ENCODE measurements at regions of chr21 and their contacts with region 1.

Region 1: GRCh38 chr21:14864211-14865021 is 200.4 kb downstream of the NRIP1 start:
- DNase-seq: peak; percentile 63
- H3K4me3 ChIP-seq: no peak overlapping the region
- H3K27ac ChIP-seq: no peak overlapping the region
- H3K4me1 ChIP-seq: no peaks in the 10 kb centered on the region
- H3K27me3 ChIP-seq: no peaks in the 10 kb centered on the region
- CTCF ChIP-seq: peak; percentile 76

Region 2: GRCh38 chr21:14259747-14260146 is 604.7 kb before region 1 on chr21:
- CTCF ChIA-PET with region 1: no interaction called
- POLR2A ChIA-PET with region 1: no interaction called
- intact Hi-C with region 1: loop called (anchors 10 kb)
- DNase-seq: peak; percentile 78
- H3K4me3 ChIP-seq: no peak overlapping the region
- H3K27ac ChIP-seq: no peak overlapping the region
- H3K4me1 ChIP-seq: no peaks in the 10 kb centered on the region
- H3K27me3 ChIP-seq: peaks cover 6% of the 10 kb centered on the region
- CTCF ChIP-seq: peak; percentile 72

Region 3: DNA sequence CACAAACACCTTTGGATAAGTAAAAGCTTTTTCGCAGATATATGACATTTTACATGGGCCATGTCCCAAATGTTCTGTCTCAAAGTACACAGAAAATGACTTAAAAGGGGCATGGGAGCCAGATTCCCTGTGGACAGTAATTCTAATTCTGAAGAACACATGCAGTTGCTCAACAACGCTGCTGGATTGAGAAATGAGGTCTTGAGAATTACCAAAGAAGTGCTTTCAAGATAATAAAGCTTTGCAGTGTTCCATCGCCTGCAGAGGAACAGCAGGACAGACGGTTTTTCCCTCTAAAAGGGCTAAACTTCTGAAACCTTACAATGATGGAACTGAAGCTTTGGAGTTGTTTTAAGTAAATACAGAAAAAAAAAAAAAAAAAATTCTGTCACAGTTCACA is 426.2 kb before region 1 on chr21:
- CTCF ChIA-PET with region 1: no interaction called
- POLR2A ChIA-PET with region 1: no interaction called
- intact Hi-C with region 1: loop called (anchors 10 kb)
- DNase-seq: peak; percentile 4
- H3K4me3 ChIP-seq: no peak overlapping the region
- H3K27ac ChIP-seq: no peak overlapping the region
- H3K4me1 ChIP-seq: no peaks in the 10 kb centered on the region
- H3K27me3 ChIP-seq: no peaks in the 10 kb centered on the region
- CTCF ChIP-seq: no peak

Region 4: GRCh38 chr21:14977814-14978213 is 113.4 kb after region 1 on chr21:
- CTCF ChIA-PET with region 1: no interaction called
- POLR2A ChIA-PET with region 1: no interaction called
- intact Hi-C with region 1: no loop called
- DNase-seq: no peak
- H3K4me3 ChIP-seq: no peak overlapping the region
- H3K27ac ChIP-seq: no peak overlapping the region
- H3K4me1 ChIP-seq: no peaks in the 10 kb centered on the region
- H3K27me3 ChIP-seq: no peaks in the 10 kb centered on the region
- CTCF ChIP-seq: no peak

Region 5: GRCh38 chr21:14989359-14989758 is 124.9 kb after region 1 on chr21:
- CTCF ChIA-PET with region 1: no interaction called
- POLR2A ChIA-PET with region 1: no interaction called
- intact Hi-C with region 1: no loop called
- DNase-seq: no peak
- H3K4me3 ChIP-seq: no peak overlapping the region
- H3K27ac ChIP-seq: no peak overlapping the region
- H3K4me1 ChIP-seq: no peaks in the 10 kb centered on the region
- H3K27me3 ChIP-seq: no peaks in the 10 kb centered on the region
- CTCF ChIP-seq: no peak

Region 6: DNA sequence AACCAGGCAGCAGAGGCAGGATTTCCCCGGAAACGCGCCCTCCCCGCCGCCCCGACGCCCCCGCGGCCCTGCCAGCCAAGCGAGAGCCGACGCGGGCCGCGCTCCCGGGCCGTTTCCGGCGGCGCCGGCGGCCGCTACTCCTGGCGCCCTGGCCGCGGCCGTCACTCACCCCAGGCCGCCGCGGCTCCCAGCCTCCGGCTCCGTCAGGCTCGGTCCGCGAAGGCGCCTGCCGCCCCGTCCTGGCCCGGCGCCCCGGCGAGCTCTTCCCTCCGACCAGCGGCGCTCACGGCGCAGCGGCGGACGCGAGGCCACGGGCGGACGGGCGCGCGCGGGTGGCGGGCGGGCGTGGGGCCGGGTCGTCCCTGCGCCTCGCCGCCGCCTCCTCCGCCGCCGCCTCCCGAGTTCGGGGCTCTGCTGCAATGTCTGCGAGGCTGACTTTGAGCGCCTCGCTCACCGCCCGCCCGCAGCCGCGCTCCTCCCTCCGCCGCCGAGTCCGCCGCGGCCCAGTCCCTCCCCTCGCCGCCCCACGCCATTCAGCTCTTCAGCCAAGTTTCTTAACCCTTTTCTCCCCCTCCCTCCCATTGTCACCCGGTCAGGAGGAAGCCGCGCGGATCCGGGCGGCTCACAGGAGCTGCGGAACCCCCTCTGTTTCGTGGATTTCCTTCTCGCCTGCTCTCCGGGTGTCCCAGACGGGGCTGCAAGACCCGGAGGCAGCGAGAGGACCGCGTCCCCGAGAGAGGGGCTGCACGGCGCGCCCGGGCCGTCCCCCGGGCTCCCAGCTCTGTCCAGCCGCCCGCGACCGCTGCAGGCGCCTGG is 200.4 kb after region 1 on chr21 and contains the start of gene NRIP1:
- CTCF ChIA-PET with region 1: no interaction called
- POLR2A ChIA-PET with region 1: no interaction called
- intact Hi-C with region 1: loop called (anchors 10 kb)
- DNase-seq: peak; percentile 87
- H3K4me3 ChIP-seq: peak within 1 kb of the TSS; percentile 78
- H3K27ac ChIP-seq: peak within 1 kb of the TSS; percentile 85
- H3K4me1 ChIP-seq: peaks cover 35% of the 10 kb centered on the region
- H3K27me3 ChIP-seq: no peaks in the 10 kb centered on the region
- CTCF ChIP-seq: no peak
- total RNA-seq, gene NRIP1: 14.6 and 15.4 TPM in 2 replicates

Region 7: GRCh38 chr21:15483138-15483780 is 618.8 kb after region 1 on chr21:
- CTCF ChIA-PET with region 1: interaction called, 6 read pairs
- POLR2A ChIA-PET with region 1: no interaction called
- intact Hi-C with region 1: loop called (anchors 1 kb)
- DNase-seq: peak; percentile 84
- H3K4me3 ChIP-seq: no peak overlapping the region
- H3K27ac ChIP-seq: no peak overlapping the region
- H3K4me1 ChIP-seq: no peaks in the 10 kb centered on the region
- H3K27me3 ChIP-seq: no peaks in the 10 kb centered on the region
- CTCF ChIP-seq: peak; percentile 90

Region 8: GRCh38 chr21:15592271-15592860 is 728.0 kb after region 1 on chr21:
- CTCF ChIA-PET with region 1: no interaction called
- POLR2A ChIA-PET with region 1: no interaction called
- intact Hi-C with region 1: loop called (anchors 5 kb)
- DNase-seq: peak; percentile 50
- H3K4me3 ChIP-seq: no peak overlapping the region
- H3K27ac ChIP-seq: no peak overlapping the region
- H3K4me1 ChIP-seq: no peaks in the 10 kb centered on the region
- H3K27me3 ChIP-seq: no peaks in the 10 kb centered on the region
- CTCF ChIP-seq: peak; percentile 70